Activated naive CD4-positive, alpha-beta T cell treated with anti-CD3 and anti-CD28 coated beads for 36 hours (primary cell): ENCODE measurements at regions of chr5 and their contacts with region 1.

Region 1: GRCh38 chr5:176537608-176538504 is 654 bp upstream of the RNF44 start:
- DNase-seq: peak; percentile 99
- H3K4me3 Mint-ChIP-seq: peak overlapping the region; percentile 87
- H3K27ac Mint-ChIP-seq: peak overlapping the region; percentile 93
- H3K4me1 Mint-ChIP-seq: peaks cover 67% of the 10 kb centered on the region
- H3K27me3 Mint-ChIP-seq: no peaks in the 10 kb centered on the region

Region 2: GRCh38 chr5:175657593-175658271 is 880.1 kb before region 1 on chr5 and contains the start of gene HRH2:
- CTCF ChIA-PET with region 1: no interaction called
- intact Hi-C with region 1: loop called (anchors 5 kb)
- DNase-seq: peak; percentile 74
- H3K4me3 Mint-ChIP-seq: peak within 1 kb of the TSS; percentile 90
- H3K27ac Mint-ChIP-seq: peak within 1 kb of the TSS; percentile 72
- H3K4me1 Mint-ChIP-seq: peaks cover 79% of the 10 kb centered on the region
- H3K27me3 Mint-ChIP-seq: no peaks in the 10 kb centered on the region
- total RNA-seq, gene HRH2: 8.7 to 10.0 TPM

Region 3: GRCh38 chr5:176415952-176416924 is 121.6 kb before region 1 on chr5 and contains the start of gene CLTB:
- CTCF ChIA-PET with region 1: interaction called, 21 read pairs
- intact Hi-C with region 1: loop called (anchors 1 kb)
- DNase-seq: peak; percentile 90
- H3K4me3 Mint-ChIP-seq: peak within 1 kb of the TSS; percentile 74
- H3K27ac Mint-ChIP-seq: peak within 1 kb of the TSS; percentile 74
- H3K4me1 Mint-ChIP-seq: peaks cover 38% of the 10 kb centered on the region
- H3K27me3 Mint-ChIP-seq: no peaks in the 10 kb centered on the region
- total RNA-seq, gene CLTB: 51.1 to 53.9 TPM

Region 4: GRCh38 chr5:176553262-176554077 is 15.6 kb after region 1 on chr5:
- CTCF ChIA-PET with region 1: no interaction called
- intact Hi-C with region 1: no loop called
- DNase-seq: peak; percentile 55
- H3K4me3 Mint-ChIP-seq: no peak overlapping the region
- H3K27ac Mint-ChIP-seq: no peak overlapping the region
- H3K4me1 Mint-ChIP-seq: peaks cover 58% of the 10 kb centered on the region
- H3K27me3 Mint-ChIP-seq: no peaks in the 10 kb centered on the region

Region 5: DNA sequence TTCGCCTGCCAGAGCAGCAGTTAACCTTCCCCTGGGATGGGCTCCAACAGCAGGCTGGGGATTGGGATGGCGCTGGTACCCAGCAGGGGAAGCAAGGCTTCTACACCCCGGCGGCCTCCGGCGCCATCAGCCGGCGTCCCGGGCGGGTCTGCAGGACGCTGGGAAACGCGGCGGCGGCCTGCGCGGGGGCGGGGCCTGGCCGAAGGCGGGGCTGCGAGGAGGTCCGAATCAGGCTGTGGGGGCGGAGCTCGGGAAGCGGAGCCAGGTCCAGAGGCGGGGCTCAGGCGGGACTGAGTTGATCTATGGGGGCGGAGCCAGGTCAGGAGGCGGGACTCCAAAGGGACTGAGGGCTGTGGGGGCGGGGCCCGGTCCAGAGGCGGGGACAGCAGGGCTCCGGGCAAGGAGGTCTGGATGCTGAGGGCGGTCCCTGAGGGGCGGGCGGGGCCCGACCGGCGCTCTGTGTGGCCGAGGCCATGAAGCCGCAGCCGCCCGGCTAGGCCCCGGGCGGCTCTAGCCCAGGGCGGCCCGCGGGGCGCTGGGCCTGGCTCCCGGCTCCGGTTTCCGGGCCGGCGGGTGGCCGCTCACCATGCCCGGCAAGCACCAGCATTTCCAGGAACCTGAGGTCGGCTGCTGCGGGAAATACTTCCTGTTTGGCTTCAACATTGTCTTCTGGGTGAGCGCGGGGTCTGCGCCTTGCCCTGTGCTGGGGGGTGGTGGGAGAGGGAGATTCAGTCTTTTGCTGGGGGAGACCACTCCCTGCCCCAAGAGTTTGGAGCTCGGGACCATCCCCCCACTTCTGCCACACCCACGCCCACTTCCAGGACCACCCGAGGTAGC is 109.4 kb after region 1 on chr5 and contains the start of gene TSPAN17:
- CTCF ChIA-PET with region 1: interaction called, 4 read pairs
- intact Hi-C with region 1: loop called (anchors 2 kb)
- DNase-seq: peak; percentile 100
- H3K4me3 Mint-ChIP-seq: peak within 1 kb of the TSS; percentile 86
- H3K27ac Mint-ChIP-seq: peak within 1 kb of the TSS; percentile 86
- H3K4me1 Mint-ChIP-seq: peaks cover 44% of the 10 kb centered on the region
- H3K27me3 Mint-ChIP-seq: no peaks in the 10 kb centered on the region
- total RNA-seq, gene TSPAN17: 17.2 to 17.4 TPM

Region 6: DNA sequence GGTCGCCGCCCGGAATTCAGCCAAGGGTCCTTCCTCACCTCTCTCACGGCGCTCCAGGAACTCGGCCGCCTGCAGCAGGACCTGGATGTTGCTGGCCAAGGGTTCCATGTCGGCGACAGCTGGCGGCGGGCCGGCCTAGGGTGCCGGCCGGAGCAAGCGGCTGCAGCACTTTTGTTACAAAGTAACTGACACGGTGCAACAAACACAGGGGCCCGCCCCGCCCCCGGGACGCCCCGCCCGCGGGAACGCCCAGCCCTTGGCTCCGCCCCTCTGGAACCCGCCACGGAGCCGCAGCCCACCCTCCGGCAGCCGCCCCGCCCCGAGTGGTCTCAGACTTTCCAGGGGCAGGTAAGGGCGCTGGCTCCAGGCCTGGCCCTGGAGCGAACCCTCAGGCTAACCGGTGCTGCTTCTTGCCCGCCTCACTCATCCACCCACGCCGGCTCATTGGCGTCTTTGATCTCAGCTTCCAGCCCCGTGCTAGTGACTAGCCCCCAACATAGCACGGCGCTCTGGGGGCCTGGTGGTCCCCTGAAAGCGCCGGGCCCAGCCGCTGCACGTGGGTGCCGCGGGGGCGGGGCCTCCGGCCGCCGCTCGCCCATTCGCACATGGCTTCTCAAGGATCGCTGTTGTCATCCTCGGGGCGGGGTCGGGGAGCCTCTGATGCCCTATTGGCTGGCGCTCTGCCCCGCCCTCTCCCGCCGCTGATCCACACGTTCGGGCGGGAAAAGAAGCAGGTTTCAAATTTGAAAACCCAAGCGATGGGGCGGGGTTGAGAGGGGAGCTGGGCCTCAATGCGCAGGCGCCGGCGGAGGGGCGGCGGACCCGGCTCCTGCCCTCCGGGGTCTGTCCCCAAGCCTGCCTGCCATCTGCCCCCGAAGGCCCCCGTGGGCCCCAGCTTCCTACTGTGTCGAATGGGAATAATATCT is 774.1 kb after region 1 on chr5 and contains the start of gene MXD3:
- CTCF ChIA-PET with region 1: no interaction called
- intact Hi-C with region 1: loop called (anchors 5 kb)
- DNase-seq: peak; percentile 99
- H3K4me3 Mint-ChIP-seq: peak within 1 kb of the TSS; percentile 97
- H3K27ac Mint-ChIP-seq: peak within 1 kb of the TSS; percentile 82
- H3K4me1 Mint-ChIP-seq: peaks cover 20% of the 10 kb centered on the region
- H3K27me3 Mint-ChIP-seq: peaks cover 3% of the 10 kb centered on the region
- total RNA-seq, gene MXD3: 45.0 to 51.7 TPM